GM12878 (cell line): ENCODE measurements at regions of chr1 and their contacts with region 1.

Region 1: DNA sequence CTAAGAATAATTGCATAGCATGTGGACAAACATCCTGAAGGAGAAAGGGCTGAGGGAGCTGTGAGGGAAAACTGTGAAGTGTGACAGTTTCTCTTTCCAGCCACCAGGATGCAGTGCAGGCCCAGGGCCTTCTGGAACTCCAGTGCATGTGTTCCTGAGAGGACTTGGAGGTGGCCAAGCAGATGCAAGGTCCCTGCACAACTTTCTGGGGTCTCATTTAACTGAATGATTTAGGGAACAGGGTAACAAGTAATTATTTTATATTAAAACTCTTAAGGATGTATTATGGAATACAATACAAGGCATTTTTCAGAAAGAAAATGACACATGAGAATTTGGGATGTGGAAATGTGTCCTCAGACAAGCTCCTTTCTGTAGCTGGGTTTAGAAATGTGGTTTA is 61.2 kb upstream of the MCOLN3 start:
- DNase-seq: no peak
- ATAC-seq: peak; percentile 78
- H3K4me3 ChIP-seq: no peak overlapping the region
- H3K27ac ChIP-seq: no peak overlapping the region
- H3K4me1 ChIP-seq: no peaks in the 10 kb centered on the region
- H3K27me3 ChIP-seq: no peaks in the 10 kb centered on the region
- CTCF ChIP-seq: peak; percentile 67 to 80 (median 74)
- EP300 ChIP-seq: no peak
- POLR2A ChIP-seq: no peak
- RAD21 ChIP-seq: peak; percentile 96

Region 2: GRCh38 chr1:85091671-85092280 is 17.7 kb before region 1 on chr1:
- CTCF ChIA-PET with region 1: interaction called, 14 read pairs
- POLR2A ChIA-PET with region 1: no interaction called
- RAD21 ChIA-PET with region 1: no interaction called
- SMC1A ChIA-PET with region 1: interaction called, 5 read pairs
- in situ Hi-C with region 1: no loop called
- intact Hi-C with region 1: no loop called
- DNase-seq: no peak
- ATAC-seq: peak; percentile 36; the same call in 1 of the 3 replicates
- H3K4me3 ChIP-seq: peak overlapping the region; percentile 7; the same call in 1 of the 2 replicates
- H3K27ac ChIP-seq: no peak overlapping the region
- H3K4me1 ChIP-seq: no peaks in the 10 kb centered on the region; the same call in 1 of the 2 replicates
- H3K27me3 ChIP-seq: no peaks in the 10 kb centered on the region
- CTCF ChIP-seq: no peak
- EP300 ChIP-seq: no peak
- POLR2A ChIP-seq: no peak
- RAD21 ChIP-seq: no peak